ENCODE measurements at regions of chr13 and their contacts with region 1.

Region 1: GRCh38 chr13:46143184-46143701 is 38.4 kb upstream of the CPB2 start:
- DNase-seq: no peak
- H3K4me3 ChIP-seq: no peak overlapping the region
- H3K4me3 Mint-ChIP-seq: peak overlapping the region in 1 of 7 donors; percentile 4
- H3K27ac ChIP-seq: no peak overlapping the region
- H3K27ac Mint-ChIP-seq: peak overlapping the region in 7 of 8 donors; percentile 19 to 86 (median 71)
- H3K4me1 ChIP-seq: no peaks in the 10 kb centered on the region
- H3K4me1 Mint-ChIP-seq: peaks cover 14 to 46% (median 44%) of the 10 kb centered on the region in 3 donors
- H3K27me3 ChIP-seq: no peaks in the 10 kb centered on the region
- H3K27me3 Mint-ChIP-seq: no peaks in the 10 kb centered on the region

Region 2: GRCh38 chr13:46113596-46113995 is 29.6 kb before region 1 on chr13:
- CTCF ChIA-PET with region 1: no interaction called
- POLR2A ChIA-PET with region 1: no interaction called
- DNase-seq: no peak
- H3K4me3 ChIP-seq: no peak overlapping the region
- H3K4me3 Mint-ChIP-seq: no peak overlapping the region
- H3K27ac ChIP-seq: no peak overlapping the region
- H3K27ac Mint-ChIP-seq: no peak overlapping the region
- H3K4me1 ChIP-seq: no peaks in the 10 kb centered on the region
- H3K4me1 Mint-ChIP-seq: peaks cover 0 to 2% (median 0%) of the 10 kb centered on the region in 3 donors
- H3K27me3 ChIP-seq: no peaks in the 10 kb centered on the region
- H3K27me3 Mint-ChIP-seq: peaks cover 14 to 41% of the 10 kb centered on the region in 2 donors

Region 3: DNA sequence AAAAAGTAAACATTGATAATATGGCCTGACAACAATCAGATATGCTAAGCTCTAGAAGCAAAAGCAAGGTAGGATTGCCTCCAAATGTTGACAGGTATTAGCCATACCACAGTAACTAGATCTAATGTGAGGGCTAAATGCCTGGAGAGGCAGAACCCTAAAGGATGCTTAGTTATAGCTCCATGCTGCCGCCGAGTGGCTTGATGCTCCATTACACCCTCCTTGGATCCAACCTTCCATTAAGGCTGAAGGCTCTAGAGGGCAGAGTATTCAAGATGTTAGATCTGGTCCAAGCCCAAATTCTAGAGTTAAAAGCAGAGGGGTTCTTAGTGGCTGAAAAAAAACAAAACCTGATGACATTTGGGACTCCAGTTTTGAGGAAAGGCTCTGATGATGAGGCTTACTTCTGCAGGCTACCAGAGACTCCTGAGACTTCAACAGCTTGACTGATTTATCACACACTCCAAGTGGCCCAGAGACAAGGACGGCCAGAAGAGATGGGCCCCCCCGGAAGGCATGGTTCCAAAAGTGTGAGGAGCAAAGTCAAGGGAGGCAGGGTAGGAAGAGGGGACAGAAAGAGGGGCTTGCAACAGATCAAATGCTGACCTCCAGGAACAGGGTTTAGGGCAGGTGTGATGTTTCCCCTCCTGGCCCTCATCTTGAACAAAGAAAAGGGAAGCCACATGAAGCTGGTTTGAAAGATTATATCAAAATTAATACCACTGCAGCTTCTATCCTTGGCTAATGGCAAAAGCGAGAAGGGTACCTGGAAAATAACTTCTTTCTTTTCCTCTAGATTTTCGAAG is 16.5 kb before region 1 on chr13:
- CTCF ChIA-PET with region 1: interaction called, 10 read pairs
- POLR2A ChIA-PET with region 1: interaction called, 3 read pairs
- DNase-seq: peak; percentile 40 to 69 (median 45)
- H3K4me3 ChIP-seq: no peak overlapping the region
- H3K4me3 Mint-ChIP-seq: peak overlapping the region in 1 of 7 donors; percentile 28
- H3K27ac ChIP-seq: no peak overlapping the region
- H3K27ac Mint-ChIP-seq: peak overlapping the region; percentile 48 to 94 (median 71)
- H3K4me1 ChIP-seq: peaks cover 37% of the 10 kb centered on the region
- H3K4me1 Mint-ChIP-seq: peaks cover 44 to 67% (median 65%) of the 10 kb centered on the region in 3 donors
- H3K27me3 ChIP-seq: no peaks in the 10 kb centered on the region
- H3K27me3 Mint-ChIP-seq: no peaks in the 10 kb centered on the region

Measured in CD8-positive, alpha-beta memory T cell (primary cell).